Posterior cingulate gyrus (tissue), 11 donors: ENCODE measurements at regions of chr12 and their contacts with region 1.

Region 1: DNA sequence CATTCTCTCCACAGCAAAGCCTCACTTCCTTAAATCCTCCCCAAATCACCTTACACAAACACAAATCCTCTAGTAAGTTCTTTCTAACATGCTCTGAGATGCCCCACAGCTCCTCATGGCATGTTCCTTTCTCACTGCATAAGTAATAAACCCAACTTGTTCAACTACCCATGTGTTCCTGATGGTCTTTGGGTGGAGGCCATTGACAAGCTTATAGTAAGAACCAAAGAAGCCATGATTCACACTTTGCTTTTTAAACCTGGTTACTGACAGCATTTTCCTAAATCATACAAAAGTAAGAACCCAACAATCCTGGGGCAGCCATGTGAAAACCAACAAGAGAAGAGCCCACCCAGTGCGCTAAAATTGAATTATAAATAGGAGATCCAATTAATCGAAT is 138.6 kb downstream of the ITPR2 start:
- DNase-seq: no peak

Region 2: GRCh38 chr12:26493656-26494055 is 200.7 kb before region 1 on chr12:
- intact Hi-C with region 1: no loop called
- DNase-seq: no peak

Region 3: GRCh38 chr12:26629864-26630263 is 64.5 kb before region 1 on chr12:
- intact Hi-C with region 1: loop called (anchors 2 kb)
- DNase-seq: peak in 4 of 10 donors; percentile 35 to 83 (median 52)